Prostate gland (tissue), 2 donors: ENCODE measurements at regions of chr11 and their contacts with region 1.

Region 1: GRCh38 chr11:112086422-112087191 is at the starts of genes SDHD and TIMM8B:
- DNase-seq: peak; percentile 93
- H3K4me3 ChIP-seq: peak within 1 kb of the TSS; percentile 61 to 65
- H3K27ac ChIP-seq: peak within 1 kb of the TSS; percentile 64 to 78
- H3K4me1 ChIP-seq: no peaks in the 10 kb centered on the region
- H3K27me3 ChIP-seq: no peaks in the 10 kb centered on the region
- CTCF ChIP-seq: peak in 3 of 4 experiments; percentile 13 to 50 (median 50)
- POLR2A ChIP-seq: peak; percentile 53
- total RNA-seq, gene SDHD: 91.6 to 107 TPM
- total RNA-seq, gene TIMM8B: 43.1 to 49.5 TPM

Region 2: DNA sequence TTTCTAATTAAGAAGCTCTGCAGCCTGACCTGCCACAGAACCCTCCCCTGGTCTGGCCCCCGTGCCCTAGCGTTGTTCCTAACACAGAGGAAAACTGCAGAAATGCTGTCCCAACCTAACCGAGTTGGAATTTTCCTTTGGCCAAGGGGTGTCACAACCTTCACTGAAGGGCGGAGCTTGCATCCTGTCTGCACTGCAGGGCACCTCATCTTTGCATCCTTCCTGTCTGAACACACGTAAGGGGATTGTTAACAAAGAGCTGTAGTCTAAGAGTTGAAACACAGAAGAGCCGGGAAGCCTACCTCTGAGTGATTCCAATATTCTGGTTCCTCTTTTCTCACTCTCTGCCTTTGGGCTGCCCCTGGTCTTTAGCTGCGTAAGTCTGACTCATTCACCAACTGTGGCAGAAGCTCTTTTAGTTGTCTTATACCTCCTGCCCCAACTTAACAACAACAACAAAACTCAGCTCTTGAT is 147.9 kb before region 1 on chr11:
- intact Hi-C with region 1: loop called (anchors 5 kb)
- DNase-seq: no peak
- H3K4me3 ChIP-seq: no peak overlapping the region
- H3K27ac ChIP-seq: peak overlapping the region; percentile 18 to 71
- H3K4me1 ChIP-seq: no peaks in the 10 kb centered on the region
- H3K27me3 ChIP-seq: no peaks in the 10 kb centered on the region
- CTCF ChIP-seq: no peak
- POLR2A ChIP-seq: no peak